B cell (primary cell): ENCODE measurements at regions of chr17 and their contacts with region 1.

Region 1: DNA sequence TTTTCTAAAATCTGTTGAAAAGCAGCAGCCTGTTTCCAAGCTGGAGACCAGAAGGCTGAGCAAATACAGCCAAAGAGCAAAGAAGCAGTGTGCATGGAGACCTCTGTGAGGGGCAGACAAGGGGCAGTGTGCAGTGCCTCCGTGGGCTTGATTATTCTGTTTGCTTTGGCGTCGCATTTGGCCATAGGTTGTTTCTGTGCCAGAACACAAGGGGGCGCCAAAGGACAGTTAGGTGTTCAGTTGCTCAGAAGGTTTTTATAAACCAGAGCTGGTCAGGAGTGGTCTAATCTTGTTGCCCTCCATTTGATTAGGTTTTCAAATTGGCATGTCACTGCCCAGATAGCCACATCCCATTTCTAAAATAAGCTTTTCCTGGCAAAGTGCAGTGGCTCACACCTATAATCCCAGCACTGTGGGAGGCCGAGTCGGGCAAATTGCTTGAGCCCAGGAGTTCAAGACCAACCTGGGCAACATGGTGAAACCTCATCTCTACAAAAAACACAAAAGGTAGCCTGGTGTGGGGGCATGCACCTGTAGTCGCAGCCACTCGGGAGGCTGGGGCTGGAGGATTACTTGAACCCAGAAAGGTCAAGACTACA is 10.6 kb downstream of the MYH3 start:
- DNase-seq: peak; percentile 75
- ATAC-seq: peak; percentile 47
- H3K4me3 ChIP-seq: no peak overlapping the region
- H3K4me3 Mint-ChIP-seq: no peak overlapping the region
- H3K27ac ChIP-seq: no peak overlapping the region
- H3K27ac Mint-ChIP-seq: no peak overlapping the region
- H3K4me1 ChIP-seq: no peaks in the 10 kb centered on the region
- H3K4me1 Mint-ChIP-seq: peaks cover 2% of the 10 kb centered on the region
- H3K27me3 ChIP-seq: no peaks in the 10 kb centered on the region
- H3K27me3 Mint-ChIP-seq: no peaks in the 10 kb centered on the region
- CTCF ChIP-seq: peak; percentile 94

Region 2: GRCh38 chr17:10516065-10516464 is 130.4 kb before region 1 on chr17:
- CTCF ChIA-PET with region 1: no interaction called
- POLR2A ChIA-PET with region 1: no interaction called
- intact Hi-C with region 1: no loop called
- DNase-seq: no peak
- ATAC-seq: no peak
- H3K4me3 ChIP-seq: no peak overlapping the region
- H3K4me3 Mint-ChIP-seq: no peak overlapping the region
- H3K27ac ChIP-seq: no peak overlapping the region
- H3K27ac Mint-ChIP-seq: no peak overlapping the region
- H3K4me1 ChIP-seq: no peaks in the 10 kb centered on the region
- H3K4me1 Mint-ChIP-seq: no peaks in the 10 kb centered on the region
- H3K27me3 ChIP-seq: no peaks in the 10 kb centered on the region
- H3K27me3 Mint-ChIP-seq: peaks cover 7% of the 10 kb centered on the region
- CTCF ChIP-seq: no peak

Region 3: DNA sequence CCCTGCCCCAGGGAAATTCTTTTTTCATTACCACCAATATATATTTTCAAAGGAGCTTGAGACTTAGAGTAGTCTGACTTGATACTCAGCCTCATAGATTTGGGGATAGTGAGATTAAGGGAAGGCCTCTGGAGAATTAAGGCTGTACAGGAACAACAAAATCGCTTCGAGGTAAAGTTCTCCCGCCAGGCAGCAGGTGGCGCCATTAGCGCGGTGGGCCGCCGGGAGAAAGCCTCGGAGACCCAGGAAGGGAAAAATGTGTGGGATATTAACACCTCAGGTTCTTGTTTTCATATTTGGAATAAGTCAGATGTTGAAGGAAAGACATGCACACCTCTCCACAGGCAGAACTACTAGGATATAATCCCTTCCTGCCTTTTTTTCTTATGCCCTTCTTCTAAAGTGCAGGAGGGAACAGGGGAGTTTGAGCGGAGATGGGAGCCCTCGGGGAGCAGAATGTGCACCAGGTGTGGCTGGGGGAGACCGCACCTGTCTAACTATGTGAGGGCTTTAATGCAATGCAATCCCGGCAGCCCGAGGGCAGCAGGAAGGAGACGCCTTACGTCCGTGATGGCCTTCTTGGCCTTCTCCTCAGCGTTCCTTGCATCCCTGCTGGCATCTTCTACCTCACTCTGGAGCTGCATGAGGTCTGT is 15.3 kb before region 1 on chr17:
- CTCF ChIA-PET with region 1: interaction called, 113 read pairs
- POLR2A ChIA-PET with region 1: no interaction called
- intact Hi-C with region 1: no loop called
- DNase-seq: peak; percentile 43
- ATAC-seq: no peak
- H3K4me3 ChIP-seq: no peak overlapping the region
- H3K4me3 Mint-ChIP-seq: no peak overlapping the region
- H3K27ac ChIP-seq: no peak overlapping the region
- H3K27ac Mint-ChIP-seq: no peak overlapping the region
- H3K4me1 ChIP-seq: peaks cover 13 to 26% of the 10 kb centered on the region in 2 donors
- H3K4me1 Mint-ChIP-seq: peaks cover 28% of the 10 kb centered on the region
- H3K27me3 ChIP-seq: no peaks in the 10 kb centered on the region
- H3K27me3 Mint-ChIP-seq: no peaks in the 10 kb centered on the region
- CTCF ChIP-seq: peak; percentile 92

Region 4: GRCh38 chr17:10664571-10664970 is 18.1 kb after region 1 on chr17:
- CTCF ChIA-PET with region 1: interaction called, 12 read pairs
- POLR2A ChIA-PET with region 1: no interaction called
- intact Hi-C with region 1: no loop called
- DNase-seq: no peak
- ATAC-seq: no peak
- H3K4me3 ChIP-seq: no peak overlapping the region
- H3K4me3 Mint-ChIP-seq: no peak overlapping the region
- H3K27ac ChIP-seq: no peak overlapping the region
- H3K27ac Mint-ChIP-seq: no peak overlapping the region
- H3K4me1 ChIP-seq: no peaks in the 10 kb centered on the region
- H3K4me1 Mint-ChIP-seq: no peaks in the 10 kb centered on the region
- H3K27me3 ChIP-seq: no peaks in the 10 kb centered on the region
- H3K27me3 Mint-ChIP-seq: no peaks in the 10 kb centered on the region
- CTCF ChIP-seq: no peak

Region 5: GRCh38 chr17:10683853-10684252 is 37.4 kb after region 1 on chr17:
- CTCF ChIA-PET with region 1: interaction called, 9 read pairs
- POLR2A ChIA-PET with region 1: no interaction called
- intact Hi-C with region 1: loop called (anchors 2 kb)
- DNase-seq: peak; percentile 27
- ATAC-seq: no peak
- H3K4me3 ChIP-seq: no peak overlapping the region
- H3K4me3 Mint-ChIP-seq: no peak overlapping the region
- H3K27ac ChIP-seq: no peak overlapping the region
- H3K27ac Mint-ChIP-seq: no peak overlapping the region
- H3K4me1 ChIP-seq: no peaks in the 10 kb centered on the region
- H3K4me1 Mint-ChIP-seq: peaks cover 5% of the 10 kb centered on the region
- H3K27me3 ChIP-seq: no peaks in the 10 kb centered on the region
- H3K27me3 Mint-ChIP-seq: no peaks in the 10 kb centered on the region
- CTCF ChIP-seq: peak; percentile 67

Region 6: GRCh38 chr17:10713318-10713717 is 66.8 kb after region 1 on chr17:
- CTCF ChIA-PET with region 1: no interaction called
- POLR2A ChIA-PET with region 1: no interaction called
- intact Hi-C with region 1: no loop called
- DNase-seq: no peak
- ATAC-seq: no peak
- H3K4me3 ChIP-seq: no peak overlapping the region
- H3K4me3 Mint-ChIP-seq: no peak overlapping the region
- H3K27ac ChIP-seq: no peak overlapping the region
- H3K27ac Mint-ChIP-seq: no peak overlapping the region
- H3K4me1 ChIP-seq: no peaks in the 10 kb centered on the region
- H3K4me1 Mint-ChIP-seq: peaks cover 3% of the 10 kb centered on the region
- H3K27me3 ChIP-seq: no peaks in the 10 kb centered on the region
- H3K27me3 Mint-ChIP-seq: no peaks in the 10 kb centered on the region
- CTCF ChIP-seq: no peak